CD14-positive monocyte (primary cell): ENCODE measurements at regions of chr20 and their contacts with region 1.

Region 1: GRCh38 chr20:5191829-5192569 is 65.2 kb downstream of the CDS2 start:
- DNase-seq: peak; percentile 59 to 70 (median 69)
- H3K4me3 ChIP-seq: no peak overlapping the region
- H3K4me3 Mint-ChIP-seq: no peak overlapping the region
- H3K27ac ChIP-seq: peak overlapping the region in 1 of 2 donors; percentile 45
- H3K27ac Mint-ChIP-seq: peak overlapping the region; percentile 43 to 71 (median 68)
- H3K4me1 ChIP-seq: peaks cover 0 to 4% of the 10 kb centered on the region in 2 donors
- H3K4me1 Mint-ChIP-seq: peaks cover 6% of the 10 kb centered on the region
- H3K27me3 ChIP-seq: no peaks in the 10 kb centered on the region
- H3K27me3 Mint-ChIP-seq: no peaks in the 10 kb centered on the region
- CTCF ChIP-seq: peak; percentile 78

Region 2: GRCh38 chr20:5126512-5127203 is 65.3 kb before region 1 on chr20 and contains the start of gene CDS2:
- intact Hi-C with region 1: loop called (anchors 1 to 2 kb)
- DNase-seq: peak; percentile 99 to 100 (median 99)
- H3K4me3 ChIP-seq: peak within 1 kb of the TSS; percentile 59 to 98 (median 73)
- H3K4me3 Mint-ChIP-seq: peak within 1 kb of the TSS; percentile 93 to 96
- H3K27ac ChIP-seq: peak within 1 kb of the TSS; percentile 45 to 90
- H3K27ac Mint-ChIP-seq: peak within 1 kb of the TSS; percentile 91 to 96 (median 94)
- H3K4me1 ChIP-seq: peaks cover 18 to 26% of the 10 kb centered on the region in 2 donors
- H3K4me1 Mint-ChIP-seq: peaks cover 35% of the 10 kb centered on the region
- H3K27me3 ChIP-seq: no peaks in the 10 kb centered on the region
- H3K27me3 Mint-ChIP-seq: peaks cover 0 to 3% (median 0%) of the 10 kb centered on the region in 3 donors
- CTCF ChIP-seq: peak; percentile 49
- polyA plus RNA-seq, gene CDS2: 28.6 to 62.6 (median 54.4) TPM

Region 3: DNA sequence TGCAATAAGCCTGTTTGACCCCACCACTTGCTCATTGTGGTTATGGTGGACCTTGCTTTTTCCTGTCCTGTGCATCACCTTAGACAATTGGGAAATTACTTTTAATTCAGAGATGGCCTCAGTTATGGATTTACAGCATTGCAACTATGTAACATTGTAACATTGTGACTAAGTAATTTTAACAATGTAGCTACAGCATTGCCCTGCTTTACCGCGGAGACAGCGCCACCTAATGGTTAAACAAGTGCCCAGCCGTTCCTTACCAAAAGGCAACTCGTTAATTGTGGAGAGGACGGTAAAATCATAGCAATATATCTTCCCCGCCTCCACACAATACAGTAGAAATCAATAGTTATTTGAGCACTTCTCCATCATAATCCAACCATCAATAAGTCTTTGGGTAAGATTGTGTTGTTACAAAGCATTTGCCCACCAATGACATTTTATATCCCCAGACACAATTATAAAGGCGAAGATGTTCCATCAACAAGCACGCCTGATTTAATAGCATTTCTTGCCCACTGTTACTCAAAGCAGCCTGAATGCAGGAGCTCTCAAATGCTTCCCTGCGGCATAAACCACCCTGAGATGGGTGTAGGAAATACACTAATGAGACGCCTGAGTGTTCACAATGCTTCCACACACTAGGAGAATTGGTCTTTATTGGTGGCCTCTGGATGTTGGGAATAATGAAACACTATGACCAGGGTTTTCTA is 31.1 kb after region 1 on chr20:
- intact Hi-C with region 1: no loop called
- DNase-seq: peak; percentile 40 to 54 (median 49)
- H3K4me3 ChIP-seq: no peak overlapping the region
- H3K4me3 Mint-ChIP-seq: no peak overlapping the region
- H3K27ac ChIP-seq: no peak overlapping the region
- H3K27ac Mint-ChIP-seq: no peak overlapping the region
- H3K4me1 ChIP-seq: peaks cover 9 to 12% of the 10 kb centered on the region in 2 donors
- H3K4me1 Mint-ChIP-seq: peaks cover 18% of the 10 kb centered on the region
- H3K27me3 ChIP-seq: peaks cover 0 to 3% of the 10 kb centered on the region in 2 donors
- H3K27me3 Mint-ChIP-seq: peaks cover 0 to 14% (median 8%) of the 10 kb centered on the region in 3 donors
- CTCF ChIP-seq: peak; percentile 92

Region 4: GRCh38 chr20:5448449-5449118 is 256.6 kb after region 1 on chr20:
- intact Hi-C with region 1: no loop called
- DNase-seq: peak; percentile 6 to 34 (median 24)
- H3K4me3 ChIP-seq: no peak overlapping the region
- H3K4me3 Mint-ChIP-seq: peak overlapping the region in 1 of 2 donors; percentile 63
- H3K27ac ChIP-seq: no peak overlapping the region
- H3K27ac Mint-ChIP-seq: no peak overlapping the region
- H3K4me1 ChIP-seq: no peaks in the 10 kb centered on the region
- H3K4me1 Mint-ChIP-seq: no peaks in the 10 kb centered on the region
- H3K27me3 ChIP-seq: peaks cover 6 to 11% of the 10 kb centered on the region in 2 donors
- H3K27me3 Mint-ChIP-seq: peaks cover 10 to 18% (median 15%) of the 10 kb centered on the region in 3 donors
- CTCF ChIP-seq: peak; percentile 84